ENCODE measurements at regions of chr6 and their contacts with region 1.

Region 1: DNA sequence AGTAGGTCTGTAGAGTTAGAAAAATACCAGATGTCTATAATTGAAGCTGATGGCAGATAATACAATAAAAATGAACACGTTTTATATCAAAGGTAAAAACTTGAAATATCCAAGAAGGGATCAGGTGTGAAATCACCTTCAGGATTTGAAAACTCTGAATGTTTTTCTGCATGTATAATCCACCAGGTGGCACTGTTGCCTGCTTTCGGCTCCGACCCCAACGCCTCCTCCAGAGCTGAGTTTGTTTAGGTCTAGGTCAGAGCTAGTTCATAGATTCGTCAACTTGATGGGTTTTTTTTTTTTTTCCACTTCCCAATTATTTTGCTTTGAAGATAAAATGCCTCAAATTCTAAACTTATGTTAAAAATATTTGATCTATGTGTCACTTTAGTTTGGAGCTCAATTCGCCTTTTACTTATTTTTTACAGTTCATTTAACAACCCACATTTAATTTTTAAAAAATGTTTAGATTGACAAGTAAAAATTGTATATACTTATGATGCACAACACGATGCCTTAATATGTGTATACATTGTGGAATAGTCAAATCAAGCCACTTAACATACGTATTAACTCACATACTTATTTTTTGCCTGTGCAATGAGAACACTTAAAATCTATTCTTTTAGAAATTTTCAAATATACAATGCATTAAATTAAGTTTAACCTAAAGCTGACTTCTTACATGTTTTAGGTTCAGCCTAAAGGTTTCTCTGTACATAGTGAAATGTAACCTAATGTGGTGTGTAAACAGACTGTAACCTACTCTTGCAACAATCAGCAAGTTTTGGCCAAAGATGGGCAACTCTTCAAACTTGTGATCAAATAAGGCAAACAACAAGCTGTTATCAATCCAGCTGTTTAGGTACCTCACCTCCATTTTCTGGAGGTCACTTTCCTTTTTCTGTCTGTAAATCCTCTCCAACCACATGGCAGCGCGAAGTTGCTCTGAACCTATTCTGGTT is 39.4 kb upstream of the ENPP4 start:
- DNase-seq: peak; percentile 57
- H3K4me3 Mint-ChIP-seq: no peak overlapping the region
- H3K27ac Mint-ChIP-seq: no peak overlapping the region
- H3K4me1 Mint-ChIP-seq: no peaks in the 10 kb centered on the region
- H3K27me3 Mint-ChIP-seq: peaks cover 55% of the 10 kb centered on the region
- CTCF ChIP-seq: peak; percentile 62

Region 2: GRCh38 chr6:45681860-45682511 is 408.4 kb before region 1 on chr6:
- CTCF ChIA-PET with region 1: no interaction called
- POLR2A ChIA-PET with region 1: no interaction called
- intact Hi-C with region 1: no loop called
- DNase-seq: peak; percentile 38
- H3K4me3 Mint-ChIP-seq: no peak overlapping the region
- H3K27ac Mint-ChIP-seq: no peak overlapping the region
- H3K4me1 Mint-ChIP-seq: no peaks in the 10 kb centered on the region
- H3K27me3 Mint-ChIP-seq: no peaks in the 10 kb centered on the region
- CTCF ChIP-seq: no peak

Region 3: GRCh38 chr6:45920819-45921511 is 169.4 kb before region 1 on chr6:
- CTCF ChIA-PET with region 1: no interaction called
- POLR2A ChIA-PET with region 1: no interaction called
- intact Hi-C with region 1: no loop called
- DNase-seq: no peak
- H3K4me3 Mint-ChIP-seq: no peak overlapping the region
- H3K27ac Mint-ChIP-seq: no peak overlapping the region
- H3K4me1 Mint-ChIP-seq: peaks cover 6% of the 10 kb centered on the region
- H3K27me3 Mint-ChIP-seq: no peaks in the 10 kb centered on the region
- CTCF ChIP-seq: no peak

Region 4: DNA sequence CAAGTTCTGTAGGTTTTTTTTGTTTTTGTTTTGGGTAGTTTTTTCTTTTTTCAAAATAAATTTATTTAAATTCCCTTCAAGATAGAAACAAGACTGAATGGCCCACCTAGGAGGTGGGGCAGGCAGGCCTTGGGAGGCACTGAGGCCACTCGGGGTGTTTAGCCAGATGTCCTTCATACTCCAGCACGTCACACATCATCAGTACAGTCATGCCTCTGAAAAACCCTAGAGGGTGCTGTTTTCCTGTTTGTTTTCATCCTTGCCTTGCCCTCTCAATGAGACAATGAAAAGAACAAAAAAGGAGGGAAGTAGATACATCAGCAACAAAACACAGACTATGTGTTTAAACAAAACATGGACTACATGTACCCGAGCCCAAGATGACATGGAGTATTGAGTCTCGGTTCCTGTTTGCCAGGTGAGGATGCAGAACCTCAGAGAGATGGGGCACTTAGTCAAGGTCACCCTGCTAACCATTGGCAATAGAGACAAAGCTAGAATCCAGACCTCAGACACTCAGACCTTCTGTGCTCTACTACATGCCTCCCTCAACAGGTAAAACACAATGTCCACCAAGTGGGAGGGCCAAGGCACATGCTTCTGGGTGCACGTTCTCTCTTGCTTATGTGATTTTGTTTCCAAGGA is 47.9 kb before region 1 on chr6:
- CTCF ChIA-PET with region 1: interaction called, 7 read pairs
- POLR2A ChIA-PET with region 1: no interaction called
- intact Hi-C with region 1: loop called (anchors 2 kb)
- DNase-seq: peak; percentile 70
- H3K4me3 Mint-ChIP-seq: no peak overlapping the region
- H3K27ac Mint-ChIP-seq: no peak overlapping the region
- H3K4me1 Mint-ChIP-seq: peaks cover 6% of the 10 kb centered on the region
- H3K27me3 Mint-ChIP-seq: no peaks in the 10 kb centered on the region
- CTCF ChIP-seq: peak; percentile 47

Region 5: GRCh38 chr6:46104209-46104608 is 13.8 kb after region 1 on chr6:
- CTCF ChIA-PET with region 1: interaction called, 18 read pairs
- POLR2A ChIA-PET with region 1: no interaction called
- intact Hi-C with region 1: no loop called
- DNase-seq: no peak
- H3K4me3 Mint-ChIP-seq: no peak overlapping the region
- H3K27ac Mint-ChIP-seq: no peak overlapping the region
- H3K4me1 Mint-ChIP-seq: no peaks in the 10 kb centered on the region
- H3K27me3 Mint-ChIP-seq: no peaks in the 10 kb centered on the region
- CTCF ChIP-seq: no peak

Region 6: GRCh38 chr6:46201702-46202101 is 111.3 kb after region 1 on chr6:
- CTCF ChIA-PET with region 1: no interaction called
- POLR2A ChIA-PET with region 1: no interaction called
- intact Hi-C with region 1: no loop called
- DNase-seq: no peak
- H3K4me3 Mint-ChIP-seq: no peak overlapping the region
- H3K27ac Mint-ChIP-seq: no peak overlapping the region
- H3K4me1 Mint-ChIP-seq: no peaks in the 10 kb centered on the region
- H3K27me3 Mint-ChIP-seq: peaks cover 15% of the 10 kb centered on the region
- CTCF ChIP-seq: no peak

Region 7: GRCh38 chr6:46221222-46221793 is 130.9 kb after region 1 on chr6:
- CTCF ChIA-PET with region 1: interaction called, 18 read pairs
- POLR2A ChIA-PET with region 1: interaction called, 3 read pairs
- intact Hi-C with region 1: loop called (anchors 1 kb)
- DNase-seq: peak; percentile 47
- H3K4me3 Mint-ChIP-seq: no peak overlapping the region
- H3K27ac Mint-ChIP-seq: no peak overlapping the region
- H3K4me1 Mint-ChIP-seq: peaks cover 5% of the 10 kb centered on the region
- H3K27me3 Mint-ChIP-seq: no peaks in the 10 kb centered on the region
- CTCF ChIP-seq: peak; percentile 65

Region 8: DNA sequence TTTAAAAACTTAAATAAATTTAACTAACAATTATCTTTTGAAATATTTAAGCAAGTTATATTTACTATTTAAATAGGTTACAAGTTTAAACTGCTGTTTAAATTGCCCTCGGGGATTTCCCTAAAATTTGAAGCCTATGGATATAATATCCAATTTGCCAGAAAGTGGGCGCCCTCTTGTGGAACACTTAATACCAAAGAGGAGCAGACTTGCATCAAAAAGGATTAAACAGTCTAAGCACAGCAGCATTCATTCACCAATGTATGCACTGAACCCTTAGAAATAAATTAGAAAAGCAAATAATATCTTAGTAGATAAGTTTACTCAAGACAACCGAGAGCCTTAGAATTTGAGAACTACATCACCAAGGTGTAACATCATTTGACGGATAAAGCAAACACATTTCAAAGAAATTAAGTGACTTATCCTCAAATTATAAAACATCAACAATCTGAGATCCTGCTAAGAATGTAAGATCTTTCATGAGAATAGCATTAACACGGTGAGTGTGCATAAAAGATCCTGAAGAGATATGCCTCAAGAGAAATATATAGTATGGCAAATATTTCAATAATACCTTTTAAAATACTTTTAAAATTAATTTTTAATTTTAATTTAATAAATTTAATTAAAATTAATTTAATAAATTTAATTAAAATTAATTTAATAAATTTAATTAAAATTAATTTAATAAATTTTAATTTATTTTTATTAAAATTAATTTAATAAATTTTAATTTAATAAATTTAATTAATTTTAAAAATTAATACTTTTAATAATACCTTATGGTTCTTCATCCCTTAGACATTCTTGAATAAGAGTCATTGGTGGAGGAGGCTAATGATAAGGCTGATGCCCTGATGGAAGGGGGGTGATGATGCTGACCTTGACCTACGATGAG is 691.3 kb after region 1 on chr6:
- CTCF ChIA-PET with region 1: no interaction called
- POLR2A ChIA-PET with region 1: no interaction called
- intact Hi-C with region 1: loop called (anchors 1 kb)
- DNase-seq: peak; percentile 78
- H3K4me3 Mint-ChIP-seq: no peak overlapping the region
- H3K27ac Mint-ChIP-seq: no peak overlapping the region
- H3K4me1 Mint-ChIP-seq: no peaks in the 10 kb centered on the region
- H3K27me3 Mint-ChIP-seq: peaks cover 10% of the 10 kb centered on the region
- CTCF ChIP-seq: peak; percentile 53